ENCODE measurements at regions of chr16 and their contacts with region 1.

Region 1: GRCh38 chr16:65769776-65770660 is 596.5 kb upstream of the CDH5 start:
- DNase-seq: no peak
- H3K4me3 ChIP-seq: no peak overlapping the region
- H3K27ac ChIP-seq: no peak overlapping the region
- H3K4me1 ChIP-seq: no peaks in the 10 kb centered on the region
- H3K27me3 ChIP-seq: no peaks in the 10 kb centered on the region
- CTCF ChIP-seq: no peak

Region 2: GRCh38 chr16:65716737-65717700 is 53.0 kb before region 1 on chr16:
- intact Hi-C with region 1: loop called (anchors 10 kb)
- DNase-seq: peak in 2 of 5 donors; percentile 27 to 49
- H3K4me3 ChIP-seq: no peak overlapping the region
- H3K27ac ChIP-seq: no peak overlapping the region
- H3K4me1 ChIP-seq: no peaks in the 10 kb centered on the region
- H3K27me3 ChIP-seq: no peaks in the 10 kb centered on the region
- CTCF ChIP-seq: no peak

Measured in kidney (tissue), 22 donors.